Prostate gland (tissue), 2 donors: ENCODE measurements at regions of chr12 and their contacts with region 1.

Region 1: DNA sequence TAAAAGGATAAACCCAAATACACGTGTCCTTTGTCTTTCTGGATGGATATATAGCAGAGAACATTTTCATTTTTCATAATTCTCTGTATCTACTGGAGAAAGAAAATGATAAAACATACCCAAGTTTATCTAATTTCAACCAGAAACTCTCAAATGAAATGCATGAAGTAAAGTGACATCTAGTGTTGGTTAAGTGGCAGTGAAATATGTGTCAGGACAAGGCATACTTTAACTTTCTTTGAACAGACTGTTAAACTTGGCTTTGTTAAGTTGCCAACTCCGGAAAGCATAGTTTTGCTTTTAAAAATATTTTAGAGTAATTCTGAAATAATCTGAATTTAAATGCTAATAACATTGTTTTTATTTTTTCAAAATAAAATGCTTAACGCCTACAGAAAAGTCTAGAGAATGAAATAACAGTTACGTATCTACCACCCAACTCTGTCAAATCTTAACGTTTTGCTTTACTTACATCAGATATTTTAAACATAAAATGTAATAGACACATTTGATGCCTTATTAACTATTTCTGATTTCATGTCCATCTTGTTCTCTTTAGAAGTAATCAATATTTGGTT is 25.2 kb upstream of the NTN4 start:
- DNase-seq: no peak
- H3K4me3 ChIP-seq: no peak overlapping the region
- H3K27ac ChIP-seq: no peak overlapping the region
- H3K4me1 ChIP-seq: no peaks in the 10 kb centered on the region
- H3K27me3 ChIP-seq: no peaks in the 10 kb centered on the region
- CTCF ChIP-seq: peak; percentile 29 to 87 (median 76)
- POLR2A ChIP-seq: no peak

Region 2: DNA sequence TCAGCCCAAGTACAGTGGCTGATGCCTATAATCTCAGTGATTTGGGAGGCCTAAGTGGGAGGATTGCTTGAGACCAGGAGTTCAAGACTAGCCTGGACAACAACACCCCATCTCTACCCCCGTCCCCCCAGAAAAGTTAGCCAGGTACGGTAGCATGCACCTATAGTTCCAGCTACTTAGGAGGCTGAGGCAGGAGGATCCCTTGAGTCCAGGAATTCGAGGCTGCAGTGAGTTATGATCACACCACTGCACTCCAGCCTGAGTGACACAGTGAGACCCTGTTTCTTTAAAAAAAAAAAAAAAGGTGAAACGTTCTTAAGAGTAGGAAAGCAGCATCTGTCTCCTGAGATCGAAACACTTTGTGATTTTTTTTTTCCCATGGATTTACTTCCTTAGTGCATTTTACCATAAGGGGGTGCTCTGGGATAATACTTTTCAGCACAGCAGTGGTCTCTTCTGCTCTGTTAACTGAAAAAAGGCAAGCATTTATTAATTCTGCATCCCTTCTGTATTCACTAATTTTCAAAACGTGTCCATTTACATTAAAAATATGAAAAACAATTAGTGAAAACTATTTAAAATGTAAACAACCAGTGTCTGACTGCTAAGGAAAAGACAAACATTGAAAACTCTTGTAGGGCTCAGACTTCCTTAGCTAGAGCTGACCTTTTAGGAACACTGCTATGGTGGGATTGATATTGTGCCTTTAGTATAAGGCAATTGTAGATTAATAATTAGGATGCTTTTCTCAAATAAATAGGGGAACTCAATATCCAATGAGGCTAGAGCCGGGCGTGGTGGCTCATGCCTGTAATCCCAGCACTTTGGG is 233.3 kb before region 1 on chr12:
- intact Hi-C with region 1: loop called (anchors 2 kb)
- DNase-seq: no peak
- H3K4me3 ChIP-seq: no peak overlapping the region
- H3K27ac ChIP-seq: no peak overlapping the region
- H3K4me1 ChIP-seq: no peaks in the 10 kb centered on the region
- H3K27me3 ChIP-seq: no peaks in the 10 kb centered on the region
- CTCF ChIP-seq: peak in 3 of 4 experiments; percentile 32 to 60 (median 52)
- POLR2A ChIP-seq: no peak

Region 3: GRCh38 chr12:95998611-95999286 is 183.0 kb after region 1 on chr12:
- intact Hi-C with region 1: loop called (anchors 10 kb)
- DNase-seq: peak; percentile 26
- H3K4me3 ChIP-seq: no peak overlapping the region
- H3K27ac ChIP-seq: no peak overlapping the region
- H3K4me1 ChIP-seq: no peaks in the 10 kb centered on the region
- H3K27me3 ChIP-seq: no peaks in the 10 kb centered on the region
- CTCF ChIP-seq: peak in 3 of 4 experiments; percentile 48 to 67 (median 63)
- POLR2A ChIP-seq: no peak